ENCODE measurements at regions of chr7 and their contacts with region 1.

Region 1: GRCh38 chr7:45923290-45923689 is 2.2 kb upstream of the IGFBP3 start:
- DNase-seq: peak; percentile 84
- ATAC-seq: peak; percentile 50
- H3K4me3 Mint-ChIP-seq: no peak overlapping the region
- H3K27ac Mint-ChIP-seq: no peak overlapping the region
- H3K4me1 Mint-ChIP-seq: peaks cover 17% of the 10 kb centered on the region
- H3K27me3 Mint-ChIP-seq: peaks cover 53% of the 10 kb centered on the region

Region 2: GRCh38 chr7:46352004-46352954 is 429.0 kb after region 1 on chr7:
- CTCF ChIA-PET with region 1: interaction called, 9 read pairs
- POLR2A ChIA-PET with region 1: no interaction called
- intact Hi-C with region 1: loop called in 1 of 2 experiments (anchors 1 kb)
- DNase-seq: peak; percentile 33
- ATAC-seq: no peak
- H3K4me3 Mint-ChIP-seq: no peak overlapping the region
- H3K27ac Mint-ChIP-seq: no peak overlapping the region
- H3K4me1 Mint-ChIP-seq: no peaks in the 10 kb centered on the region
- H3K27me3 Mint-ChIP-seq: no peaks in the 10 kb centered on the region

Region 3: DNA sequence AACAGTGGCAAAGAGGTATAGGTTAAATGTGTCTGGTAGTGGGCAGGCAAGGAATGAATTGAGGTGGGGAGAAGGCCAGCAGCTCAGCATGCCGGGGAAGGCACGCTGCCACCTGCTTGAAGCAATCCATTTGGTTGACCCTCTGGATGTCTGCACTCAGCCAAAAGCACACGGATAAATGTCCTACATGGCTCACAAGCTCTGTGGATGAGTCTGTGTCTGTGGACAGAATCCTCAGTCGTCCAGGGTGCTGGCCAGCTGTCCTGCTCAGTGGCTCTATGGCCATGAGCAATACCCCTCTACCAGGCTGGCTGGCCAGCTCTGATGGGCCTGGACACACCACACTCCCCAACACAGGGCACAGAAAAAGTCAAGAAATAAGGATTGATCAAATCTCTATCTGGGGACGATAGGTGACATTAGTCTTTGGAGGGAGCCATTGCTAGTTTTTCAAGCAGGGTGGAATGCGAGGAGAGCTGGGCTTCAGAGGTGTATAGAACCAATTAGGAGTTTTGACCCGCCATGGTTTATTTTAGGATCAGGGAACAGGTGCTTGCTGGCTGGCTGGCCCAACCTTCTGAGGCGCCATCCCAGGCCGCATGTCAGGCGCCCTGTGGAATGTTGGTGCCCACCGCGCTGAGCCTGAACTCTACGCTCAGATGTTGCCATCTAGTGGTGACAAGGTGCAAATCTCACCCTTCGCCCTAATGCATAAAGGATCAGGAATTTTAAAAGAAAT is 1165.2 kb after region 1 on chr7:
- CTCF ChIA-PET with region 1: interaction called, 3 read pairs
- POLR2A ChIA-PET with region 1: no interaction called
- intact Hi-C with region 1: loop called in 1 of 2 experiments (anchors 1 kb)
- DNase-seq: peak; percentile 44
- ATAC-seq: no peak
- H3K4me3 Mint-ChIP-seq: no peak overlapping the region
- H3K27ac Mint-ChIP-seq: no peak overlapping the region
- H3K4me1 Mint-ChIP-seq: no peaks in the 10 kb centered on the region
- H3K27me3 Mint-ChIP-seq: peaks cover 5% of the 10 kb centered on the region

Region 4: DNA sequence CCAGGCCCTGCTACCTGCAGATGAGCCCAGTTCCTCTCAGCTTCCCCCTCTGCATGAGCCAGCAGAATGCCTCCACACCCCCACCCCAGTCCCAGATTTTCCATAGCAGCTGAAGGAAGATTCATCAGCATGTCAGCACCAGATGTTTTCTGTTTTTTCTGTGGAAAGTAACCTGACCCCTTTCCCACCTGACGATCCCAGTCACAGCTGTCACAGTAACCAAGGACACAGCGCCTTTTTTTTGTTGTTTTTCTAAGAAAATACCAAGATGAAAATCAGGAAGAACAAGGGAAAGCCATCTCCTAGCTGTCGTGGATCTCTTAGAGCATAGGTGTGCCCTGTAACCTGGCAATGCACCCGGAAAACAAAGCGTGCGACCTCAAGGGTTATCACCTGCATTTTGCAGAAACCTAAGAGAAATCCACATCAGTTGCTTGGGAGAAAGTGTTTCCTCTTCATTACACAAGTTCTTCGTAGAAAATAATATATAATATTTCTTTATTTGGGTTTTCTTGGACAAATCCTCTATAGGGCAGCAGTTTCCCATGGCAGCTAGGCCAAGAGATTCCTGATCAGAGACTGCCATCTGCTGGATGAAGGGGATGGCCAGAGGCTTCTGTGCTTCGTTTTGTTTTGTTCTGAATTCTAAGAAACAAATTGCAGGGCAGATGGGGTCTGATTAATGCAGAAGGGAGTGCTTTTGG is 1256.7 kb after region 1 on chr7:
- CTCF ChIA-PET with region 1: no interaction called
- POLR2A ChIA-PET with region 1: no interaction called
- intact Hi-C with region 1: loop called in 1 of 2 experiments (anchors 2 kb)
- DNase-seq: peak; percentile 38
- ATAC-seq: no peak
- H3K4me3 Mint-ChIP-seq: no peak overlapping the region
- H3K27ac Mint-ChIP-seq: no peak overlapping the region
- H3K4me1 Mint-ChIP-seq: no peaks in the 10 kb centered on the region
- H3K27me3 Mint-ChIP-seq: peaks cover 5% of the 10 kb centered on the region

Region 5: GRCh38 chr7:47254081-47255006 is 1331.1 kb after region 1 on chr7:
- CTCF ChIA-PET with region 1: no interaction called
- POLR2A ChIA-PET with region 1: no interaction called
- intact Hi-C with region 1: loop called in 1 of 2 experiments (anchors 2 kb)
- DNase-seq: peak; percentile 74
- ATAC-seq: peak; percentile 86
- H3K4me3 Mint-ChIP-seq: peak overlapping the region; percentile 44
- H3K27ac Mint-ChIP-seq: no peak overlapping the region
- H3K4me1 Mint-ChIP-seq: peaks cover 3% of the 10 kb centered on the region
- H3K27me3 Mint-ChIP-seq: peaks cover 33% of the 10 kb centered on the region

Measured in activated CD4-positive, alpha-beta T cell treated with anti-CD3 and anti-CD28 coated beads for 36 hours (primary cell).